Activated CD4-positive, alpha-beta T cell treated with anti-CD3 and anti-CD28 coated beads for 36 hours (primary cell): ENCODE measurements at regions of chr9 and their contacts with region 1.

Region 1: GRCh38 chr9:112486221-112487007 is at the start of gene KIAA1958:
- DNase-seq: peak; percentile 94
- ATAC-seq: peak; percentile 96
- H3K4me3 Mint-ChIP-seq: peak within 1 kb of the TSS; percentile 95
- H3K27ac Mint-ChIP-seq: peak within 1 kb of the TSS; percentile 95
- H3K4me1 Mint-ChIP-seq: peaks cover 37% of the 10 kb centered on the region
- H3K27me3 Mint-ChIP-seq: no peaks in the 10 kb centered on the region
- total RNA-seq, gene KIAA1958: 9.7 to 13.0 TPM

Region 2: GRCh38 chr9:111483862-111484571 is 1002.4 kb before region 1 on chr9 and contains the start of gene ECPAS:
- CTCF ChIA-PET with region 1: no interaction called
- POLR2A ChIA-PET with region 1: no interaction called
- intact Hi-C with region 1: loop called in 1 of 2 experiments (anchors 5 kb)
- DNase-seq: peak; percentile 83
- ATAC-seq: peak; percentile 79
- H3K4me3 Mint-ChIP-seq: peak within 1 kb of the TSS; percentile 81
- H3K27ac Mint-ChIP-seq: peak within 1 kb of the TSS; percentile 89
- H3K4me1 Mint-ChIP-seq: peaks cover 28% of the 10 kb centered on the region
- H3K27me3 Mint-ChIP-seq: no peaks in the 10 kb centered on the region
- total RNA-seq, gene ECPAS: 78.4 to 127 TPM

Region 3: DNA sequence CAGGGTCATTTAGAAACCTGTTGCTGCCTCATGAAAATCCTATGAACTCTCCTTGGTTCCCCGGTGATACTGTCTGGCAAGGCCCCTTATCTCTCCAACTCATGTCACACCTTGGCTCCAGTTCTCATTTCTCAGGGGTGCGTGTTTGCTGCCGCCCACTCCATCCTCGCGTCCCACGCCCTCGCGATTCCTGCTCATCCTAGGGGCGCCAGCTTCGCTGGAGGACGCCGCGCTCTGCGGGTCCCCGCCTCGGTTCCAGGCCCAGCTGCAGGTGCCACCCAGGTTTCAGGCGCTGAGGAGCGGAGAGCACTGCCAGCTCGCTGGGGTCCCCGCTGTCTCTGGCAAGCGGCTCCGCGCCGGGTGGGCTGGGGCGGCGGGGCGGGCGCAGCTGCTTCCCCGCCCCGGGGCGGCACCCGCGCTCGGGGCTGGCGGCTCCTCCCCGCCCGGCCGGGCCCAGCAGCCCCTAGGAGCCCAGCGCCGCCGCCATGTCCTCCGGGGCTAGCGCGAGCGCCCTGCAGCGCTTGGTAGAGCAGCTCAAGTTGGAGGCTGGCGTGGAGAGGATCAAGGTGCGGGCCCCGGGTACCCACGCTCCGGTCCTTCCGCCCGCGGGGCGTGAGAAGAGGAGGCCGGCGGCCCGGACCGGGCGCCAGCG is 825.1 kb before region 1 on chr9 and contains the start of gene GNG10:
- CTCF ChIA-PET with region 1: no interaction called
- POLR2A ChIA-PET with region 1: no interaction called
- intact Hi-C with region 1: loop called in 1 of 2 experiments (anchors 2 kb)
- DNase-seq: peak; percentile 81
- ATAC-seq: peak; percentile 92
- H3K4me3 Mint-ChIP-seq: peak within 1 kb of the TSS; percentile 98
- H3K27ac Mint-ChIP-seq: peak within 1 kb of the TSS; percentile 95
- H3K4me1 Mint-ChIP-seq: peaks cover 25% of the 10 kb centered on the region
- H3K27me3 Mint-ChIP-seq: no peaks in the 10 kb centered on the region
- total RNA-seq, gene GNG10: 14.5 to 15.4 TPM

Region 4: DNA sequence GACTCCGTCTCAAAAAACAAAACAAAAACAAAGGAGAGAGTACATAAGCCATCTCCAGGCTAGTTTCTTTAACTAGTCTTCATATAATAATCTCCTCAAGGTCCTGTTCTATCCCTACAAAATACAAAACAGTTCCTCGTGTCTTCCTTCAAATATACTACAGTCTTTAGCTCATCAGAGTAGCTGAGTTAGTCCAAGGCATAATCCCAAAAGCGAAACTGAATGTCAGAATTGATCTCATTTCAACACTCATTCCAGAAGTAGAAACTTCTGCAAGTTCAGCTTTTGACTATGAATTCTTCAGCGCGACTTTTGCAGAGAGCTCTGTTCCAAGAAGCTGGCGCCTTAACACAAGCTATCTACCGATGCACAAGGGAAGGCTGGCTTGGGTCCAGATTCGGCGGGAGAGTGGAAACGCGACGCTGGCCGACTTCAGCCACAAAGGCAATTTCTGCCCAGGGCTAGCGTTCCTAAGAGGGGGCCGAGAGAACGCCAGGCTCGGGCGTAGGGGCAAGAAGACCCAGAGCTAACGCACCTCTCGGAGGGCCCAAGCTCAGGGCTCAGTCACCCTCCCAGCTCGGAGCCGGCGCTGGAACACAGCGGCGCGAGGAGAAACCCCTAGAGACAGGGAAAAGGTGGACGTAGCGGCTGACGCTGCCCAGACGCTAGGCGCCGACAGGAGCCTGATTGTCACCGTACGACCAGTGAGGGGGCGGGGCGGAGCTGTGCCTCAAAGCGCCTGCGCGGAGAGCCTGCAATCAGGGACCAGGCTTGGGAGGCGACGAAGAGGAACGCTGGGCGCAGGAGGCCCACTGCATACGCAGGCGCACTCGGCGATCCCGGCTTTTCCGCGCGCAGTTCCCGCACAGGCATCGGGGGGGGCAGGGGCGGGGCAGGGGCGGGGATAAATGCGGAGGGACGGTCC is 107.0 kb before region 1 on chr9:
- CTCF ChIA-PET with region 1: interaction called, 5 read pairs
- POLR2A ChIA-PET with region 1: interaction called, 5 read pairs
- intact Hi-C with region 1: loop called in 1 of 2 experiments (anchors 1 kb)
- DNase-seq: peak; percentile 99
- ATAC-seq: peak; percentile 93
- H3K4me3 Mint-ChIP-seq: peak overlapping the region; percentile 98
- H3K27ac Mint-ChIP-seq: peak overlapping the region; percentile 100
- H3K4me1 Mint-ChIP-seq: peaks cover 42% of the 10 kb centered on the region
- H3K27me3 Mint-ChIP-seq: no peaks in the 10 kb centered on the region

Region 5: DNA sequence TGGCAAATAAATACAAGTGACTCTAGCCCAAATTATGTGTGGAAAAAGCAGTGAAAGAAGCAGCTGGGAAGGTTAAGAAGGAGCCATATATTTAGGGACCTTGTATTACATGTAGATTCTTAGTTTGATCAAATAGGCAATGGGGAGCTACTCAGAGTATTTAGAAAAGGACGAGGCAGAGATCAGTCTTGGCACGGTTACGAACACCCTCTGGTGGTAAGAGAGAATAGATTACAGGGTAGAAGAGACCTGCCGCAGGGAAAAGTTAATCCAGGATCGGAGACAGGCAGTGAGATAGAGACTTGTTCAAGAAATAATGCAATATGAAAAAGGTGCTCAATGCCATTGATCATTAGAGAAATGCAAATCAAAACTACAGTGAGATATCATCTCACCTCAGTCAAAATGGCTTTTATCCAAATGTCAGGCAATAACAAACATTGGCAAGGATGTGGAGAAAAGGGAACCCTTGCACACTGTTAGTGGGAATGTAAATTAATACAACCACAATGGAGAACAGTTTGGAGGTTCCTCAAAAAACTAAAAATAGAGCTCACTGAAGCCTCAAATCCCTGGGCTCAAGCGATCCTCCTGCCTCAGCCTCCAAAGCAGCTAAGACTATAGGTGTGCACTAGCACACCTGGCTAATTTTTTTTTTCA is 219.5 kb after region 1 on chr9:
- CTCF ChIA-PET with region 1: no interaction called
- POLR2A ChIA-PET with region 1: no interaction called
- intact Hi-C with region 1: no loop called
- DNase-seq: no peak
- ATAC-seq: no peak
- H3K4me3 Mint-ChIP-seq: no peak overlapping the region
- H3K27ac Mint-ChIP-seq: no peak overlapping the region
- H3K4me1 Mint-ChIP-seq: peaks cover 28% of the 10 kb centered on the region
- H3K27me3 Mint-ChIP-seq: no peaks in the 10 kb centered on the region

Region 6: GRCh38 chr9:112750111-112750767 is 263.8 kb after region 1 on chr9 and contains the start of gene SNX30:
- CTCF ChIA-PET with region 1: interaction called, 3 read pairs
- POLR2A ChIA-PET with region 1: no interaction called
- intact Hi-C with region 1: loop called in 1 of 2 experiments (anchors 1 kb)
- DNase-seq: peak; percentile 83
- ATAC-seq: peak; percentile 45
- H3K4me3 Mint-ChIP-seq: peak within 1 kb of the TSS; percentile 83
- H3K27ac Mint-ChIP-seq: peak within 1 kb of the TSS; percentile 91
- H3K4me1 Mint-ChIP-seq: peaks cover 63% of the 10 kb centered on the region
- H3K27me3 Mint-ChIP-seq: no peaks in the 10 kb centered on the region
- total RNA-seq, gene SNX30: 4.2 to 4.6 TPM

Region 7: DNA sequence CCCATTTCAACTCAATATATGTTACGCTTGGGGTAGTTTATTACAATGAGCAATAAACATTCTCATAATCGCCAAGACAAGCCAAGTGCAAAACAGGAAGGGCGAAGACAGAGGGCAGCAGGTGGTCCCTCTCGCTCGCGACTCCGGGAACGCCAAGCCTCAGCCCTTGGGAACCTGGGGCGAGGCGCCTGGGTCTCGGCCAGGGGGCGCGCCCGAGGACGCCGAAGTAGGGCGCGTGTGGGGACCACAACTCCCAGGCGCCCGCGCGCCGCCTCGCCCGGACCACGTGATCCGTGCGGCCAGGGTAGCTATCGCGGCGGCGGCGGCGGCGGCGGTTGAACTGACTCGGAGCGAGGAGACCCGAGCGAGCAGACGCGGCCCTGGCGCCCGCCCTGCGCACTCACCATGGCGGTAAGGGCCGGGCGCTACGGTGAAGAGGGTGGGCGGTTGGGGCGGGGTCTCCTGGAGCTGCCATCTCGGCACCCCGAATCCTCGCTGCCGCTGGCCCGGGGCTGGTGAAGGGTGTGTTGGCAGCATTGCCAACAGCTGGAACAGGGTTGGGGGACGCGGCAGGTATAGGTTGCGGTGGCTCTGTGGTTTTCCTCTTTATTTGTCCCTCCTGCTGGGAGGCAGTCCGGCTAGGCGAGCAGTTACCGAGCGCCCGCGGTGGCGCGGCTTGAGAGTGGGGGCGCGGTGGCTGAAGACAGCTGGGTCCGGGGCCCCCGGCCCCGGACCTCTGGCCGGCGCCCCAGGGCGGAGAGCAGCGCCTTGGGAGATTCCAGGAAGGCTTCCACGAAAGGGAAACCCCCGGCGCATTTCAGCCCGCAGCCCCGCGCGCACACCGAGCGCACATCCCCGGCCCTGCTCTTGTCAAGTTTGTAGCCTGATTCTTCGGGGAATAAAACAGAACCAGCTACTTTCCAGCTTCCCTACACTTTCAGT is 664.5 kb after region 1 on chr9 and contains the start of gene SLC31A2:
- CTCF ChIA-PET with region 1: no interaction called
- POLR2A ChIA-PET with region 1: no interaction called
- intact Hi-C with region 1: loop called in 1 of 2 experiments (anchors 1 kb)
- DNase-seq: peak; percentile 95
- ATAC-seq: peak; percentile 97
- H3K4me3 Mint-ChIP-seq: peak within 1 kb of the TSS; percentile 73
- H3K27ac Mint-ChIP-seq: peak within 1 kb of the TSS; percentile 51
- H3K4me1 Mint-ChIP-seq: peaks cover 29% of the 10 kb centered on the region
- H3K27me3 Mint-ChIP-seq: peaks cover 2% of the 10 kb centered on the region
- total RNA-seq, gene SLC31A2: 2.7 to 3.2 TPM

Region 8: DNA sequence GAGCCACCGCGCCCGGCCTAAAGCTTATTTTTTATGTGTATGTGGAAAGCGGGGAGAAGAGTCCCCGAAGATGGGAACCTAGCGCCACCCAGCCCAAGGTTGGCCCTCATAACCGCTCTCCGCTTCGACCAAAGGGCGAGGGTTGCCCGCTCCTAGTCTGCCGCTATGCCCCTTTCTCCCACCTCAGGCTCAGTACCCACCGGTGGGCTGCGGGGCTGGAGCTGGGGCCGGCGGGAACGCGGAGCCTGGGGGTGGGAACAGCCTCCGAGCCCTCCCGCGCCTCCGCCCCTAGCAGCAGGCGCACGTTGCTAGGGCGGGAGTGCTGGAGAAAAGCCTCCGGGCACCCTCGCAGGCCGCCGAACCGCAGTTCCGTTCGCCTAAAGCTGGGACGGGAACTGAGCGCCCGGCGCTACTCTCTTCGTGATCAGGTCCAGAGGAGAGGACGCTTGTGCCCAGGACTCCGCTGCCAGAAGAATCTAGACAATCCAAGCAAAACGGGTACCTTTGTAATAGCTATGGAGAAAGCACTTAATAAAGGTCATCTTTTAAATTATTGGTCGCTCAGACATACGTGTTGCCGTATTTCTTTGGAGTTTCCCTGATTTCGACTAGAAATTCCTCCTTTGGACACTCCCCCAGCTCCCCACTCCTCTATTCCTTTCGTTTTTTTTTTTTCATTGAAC is 853.7 kb after region 1 on chr9 and contains the start of gene WDR31:
- CTCF ChIA-PET with region 1: no interaction called
- POLR2A ChIA-PET with region 1: no interaction called
- intact Hi-C with region 1: loop called in 1 of 2 experiments (anchors 2 kb)
- DNase-seq: peak; percentile 88
- ATAC-seq: peak; percentile 96
- H3K4me3 Mint-ChIP-seq: peak within 1 kb of the TSS; percentile 71
- H3K27ac Mint-ChIP-seq: peak within 1 kb of the TSS; percentile 43
- H3K4me1 Mint-ChIP-seq: peaks cover 27% of the 10 kb centered on the region
- H3K27me3 Mint-ChIP-seq: no peaks in the 10 kb centered on the region
- total RNA-seq, gene WDR31: 1.7 to 2.1 TPM